ENCODE measurements at regions of chr5 and their contacts with region 1.

Region 1: DNA sequence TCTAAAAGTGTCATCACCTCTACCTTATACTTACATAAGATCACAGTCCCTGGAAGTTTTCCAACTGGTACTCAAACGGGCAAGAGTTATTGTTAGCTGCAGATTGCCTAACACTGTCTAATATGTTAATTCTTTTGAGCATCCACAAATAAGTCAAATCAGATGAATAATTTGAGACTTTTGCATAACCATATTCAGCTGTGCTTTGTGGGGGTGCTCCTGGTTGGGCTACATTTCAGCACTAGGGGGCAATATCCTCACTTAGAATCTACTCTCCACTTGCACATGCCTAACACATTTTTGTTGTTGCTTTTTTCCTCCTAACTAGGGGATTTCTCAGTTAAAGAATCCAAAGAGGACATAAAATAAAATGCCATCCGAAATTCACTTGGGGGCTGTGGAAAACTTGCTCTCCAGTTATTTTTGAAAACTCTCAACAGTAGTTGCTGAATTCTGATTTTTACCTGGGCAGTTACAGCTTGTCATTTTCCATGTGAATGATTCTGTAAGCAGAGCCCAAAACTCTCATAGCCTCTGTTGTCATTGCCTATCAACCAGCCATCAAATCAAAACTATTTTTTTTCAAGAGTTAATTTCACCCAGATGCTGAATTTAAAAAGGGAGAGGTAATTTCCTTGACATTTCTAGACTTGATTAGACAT is 71.5 kb downstream of the TRIM36 start:
- DNase-seq: peak in 3 of 5 donors; percentile 18 to 58 (median 51)
- H3K4me3 ChIP-seq: no peak overlapping the region
- H3K27ac ChIP-seq: no peak overlapping the region
- H3K4me1 ChIP-seq: no peaks in the 10 kb centered on the region
- H3K27me3 ChIP-seq: no peaks in the 10 kb centered on the region
- CTCF ChIP-seq: peak; percentile 55

Region 2: GRCh38 chr5:115246361-115246991 is 148.3 kb after region 1 on chr5:
- intact Hi-C with region 1: loop called (anchors 5 kb)
- DNase-seq: peak in 2 of 5 donors; percentile 56 to 69
- H3K4me3 ChIP-seq: no peak overlapping the region
- H3K27ac ChIP-seq: no peak overlapping the region
- H3K4me1 ChIP-seq: no peaks in the 10 kb centered on the region
- H3K27me3 ChIP-seq: no peaks in the 10 kb centered on the region
- CTCF ChIP-seq: peak; percentile 63